ENCODE measurements at regions of chr6 and their contacts with region 1.

Region 1: DNA sequence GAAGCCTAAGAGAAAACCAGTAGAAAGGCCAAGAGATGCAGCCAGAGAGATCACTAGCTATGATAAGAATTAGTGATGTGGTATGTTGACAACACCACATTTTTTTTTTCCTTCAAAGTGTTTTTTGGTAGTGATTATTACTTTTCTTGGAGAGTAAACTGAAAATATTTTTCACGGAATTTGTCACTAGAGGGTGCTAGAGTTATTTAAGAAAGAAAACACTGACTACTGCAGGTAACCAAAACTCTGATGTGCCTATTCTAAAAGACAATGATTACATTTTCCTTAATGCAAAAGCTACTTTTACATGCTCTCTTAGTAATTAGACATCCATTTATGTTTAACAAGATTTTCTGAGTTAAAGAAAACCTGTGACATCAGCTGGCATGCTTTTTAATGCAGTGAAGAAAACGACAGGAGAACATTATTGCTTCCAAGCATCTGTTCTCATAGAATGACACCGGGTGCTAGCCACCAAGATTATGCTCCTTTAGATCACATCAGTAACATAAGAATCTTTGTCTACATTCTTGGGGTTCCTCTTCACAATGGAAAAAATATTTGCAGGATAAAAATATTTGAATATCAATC is 28.8 kb downstream of the RWDD2A start:
- DNase-seq: peak; percentile 28
- H3K4me3 ChIP-seq: no peak overlapping the region; a peak in 1 of 4 replicates
- H3K27ac ChIP-seq: no peak overlapping the region
- H3K4me1 ChIP-seq: peaks cover 0 to 1% of the 10 kb centered on the region in 2 experiments; a peak in 1 of 4 replicates
- H3K27me3 ChIP-seq: no peaks in the 10 kb centered on the region
- CTCF ChIP-seq: peak; percentile 77
- EP300 ChIP-seq: no peak
- RAD21 ChIP-seq: peak; percentile 80

Region 2: GRCh38 chr6:83385473-83385872 is 163.5 kb after region 1 on chr6:
- CTCF ChIA-PET with region 1: no interaction called
- POLR2A ChIA-PET with region 1: no interaction called
- DNase-seq: no peak
- H3K4me3 ChIP-seq: no peak overlapping the region
- H3K27ac ChIP-seq: no peak overlapping the region
- H3K4me1 ChIP-seq: peaks cover 0 to 22% of the 10 kb centered on the region in 2 experiments; a peak in 3 of 4 replicates
- H3K27me3 ChIP-seq: no peaks in the 10 kb centered on the region
- CTCF ChIP-seq: no peak
- EP300 ChIP-seq: no peak
- RAD21 ChIP-seq: no peak

Region 3: GRCh38 chr6:83417880-83418663 is 196.1 kb after region 1 on chr6:
- CTCF ChIA-PET with region 1: interaction called, 15 read pairs
- POLR2A ChIA-PET with region 1: no interaction called
- DNase-seq: peak; percentile 36
- H3K4me3 ChIP-seq: no peak overlapping the region
- H3K27ac ChIP-seq: no peak overlapping the region
- H3K4me1 ChIP-seq: no peaks in the 10 kb centered on the region
- H3K27me3 ChIP-seq: no peaks in the 10 kb centered on the region
- CTCF ChIP-seq: peak; percentile 63
- EP300 ChIP-seq: no peak
- RAD21 ChIP-seq: peak; percentile 79

Region 4: GRCh38 chr6:83505356-83505755 is 283.4 kb after region 1 on chr6:
- CTCF ChIA-PET with region 1: interaction called, 293 read pairs
- POLR2A ChIA-PET with region 1: no interaction called
- DNase-seq: no peak
- H3K4me3 ChIP-seq: no peak overlapping the region
- H3K27ac ChIP-seq: no peak overlapping the region
- H3K4me1 ChIP-seq: no peaks in the 10 kb centered on the region
- H3K27me3 ChIP-seq: no peaks in the 10 kb centered on the region
- CTCF ChIP-seq: no peak
- EP300 ChIP-seq: no peak
- RAD21 ChIP-seq: no peak

Region 5: GRCh38 chr6:83592770-83593394 is 370.9 kb after region 1 on chr6:
- CTCF ChIA-PET with region 1: no interaction called
- POLR2A ChIA-PET with region 1: no interaction called
- DNase-seq: peak; percentile 22
- H3K4me3 ChIP-seq: 0 out of 4 replicates have a peak overlapping the region, but pooled peaks of 1 of the 2 experiments have one; percentile 23
- H3K27ac ChIP-seq: no peak overlapping the region
- H3K4me1 ChIP-seq: no peaks in the 10 kb centered on the region; a peak in 2 of 4 replicates
- H3K27me3 ChIP-seq: no peaks in the 10 kb centered on the region
- CTCF ChIP-seq: peak; percentile 60
- EP300 ChIP-seq: no peak
- RAD21 ChIP-seq: peak; percentile 38; the same call in 1 of the 2 replicates